ENCODE measurements at regions of chr3 and their contacts with region 1.

Region 1: GRCh38 chr3:100590114-100590839 is 19.1 kb upstream of the ADGRG7 start:
- DNase-seq: peak in 8 of 9 experiments; percentile 29 to 81 (median 60)
- ATAC-seq: peak; percentile 89
- H3K4me3 ChIP-seq: peak overlapping the region in 1 of 2 experiments; percentile 9
- H3K4me3 Mint-ChIP-seq: peak overlapping the region; percentile 7
- H3K27ac ChIP-seq: no peak overlapping the region
- H3K27ac Mint-ChIP-seq: no peak overlapping the region
- H3K4me1 ChIP-seq: peaks cover 3% of the 10 kb centered on the region
- H3K4me1 Mint-ChIP-seq: peaks cover 3% of the 10 kb centered on the region
- H3K27me3 ChIP-seq: no peaks in the 10 kb centered on the region
- H3K27me3 Mint-ChIP-seq: no peaks in the 10 kb centered on the region
- CTCF ChIP-seq: peak; percentile 81

Region 2: GRCh38 chr3:100316641-100317069 is 273.6 kb before region 1 on chr3:
- CTCF ChIA-PET with region 1: interaction called, 39 read pairs
- POLR2A ChIA-PET with region 1: no interaction called
- intact Hi-C with region 1: loop called (anchors 1 kb)
- DNase-seq: peak in 6 of 9 experiments; percentile 13 to 76 (median 30)
- ATAC-seq: peak; percentile 84
- H3K4me3 ChIP-seq: no peak overlapping the region
- H3K4me3 Mint-ChIP-seq: peak overlapping the region; percentile 45
- H3K27ac ChIP-seq: no peak overlapping the region
- H3K27ac Mint-ChIP-seq: no peak overlapping the region
- H3K4me1 ChIP-seq: no peaks in the 10 kb centered on the region
- H3K4me1 Mint-ChIP-seq: peaks cover 6% of the 10 kb centered on the region
- H3K27me3 ChIP-seq: no peaks in the 10 kb centered on the region
- H3K27me3 Mint-ChIP-seq: no peaks in the 10 kb centered on the region
- CTCF ChIP-seq: peak; percentile 58

Region 3: DNA sequence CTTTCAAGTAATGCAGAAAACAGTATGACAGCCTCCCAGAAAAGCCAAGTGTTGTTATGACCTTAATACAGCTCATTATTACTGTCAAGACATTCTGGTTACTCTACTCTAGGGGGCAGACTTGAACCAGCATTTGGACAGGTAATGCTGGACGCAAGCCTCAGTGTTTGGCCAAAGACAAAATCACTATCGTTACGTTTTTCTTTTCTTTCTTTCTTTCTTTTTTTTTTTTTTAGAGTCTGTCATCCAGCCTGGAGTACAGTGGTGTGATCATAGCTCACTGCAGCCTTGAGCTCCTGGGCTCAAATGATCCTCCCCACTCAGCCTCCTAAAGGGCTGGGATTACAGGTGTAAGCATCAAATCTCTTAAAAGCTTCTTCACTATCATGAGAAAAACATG is 127.3 kb before region 1 on chr3:
- CTCF ChIA-PET with region 1: interaction called, 5 read pairs
- POLR2A ChIA-PET with region 1: no interaction called
- intact Hi-C with region 1: loop called in 1 of 2 experiments (anchors 1 kb)
- DNase-seq: peak in 2 of 9 experiments; percentile 16 to 19
- ATAC-seq: no peak
- H3K4me3 ChIP-seq: no peak overlapping the region
- H3K4me3 Mint-ChIP-seq: no peak overlapping the region
- H3K27ac ChIP-seq: no peak overlapping the region
- H3K27ac Mint-ChIP-seq: no peak overlapping the region
- H3K4me1 ChIP-seq: no peaks in the 10 kb centered on the region
- H3K4me1 Mint-ChIP-seq: no peaks in the 10 kb centered on the region
- H3K27me3 ChIP-seq: no peaks in the 10 kb centered on the region
- H3K27me3 Mint-ChIP-seq: peaks cover 2% of the 10 kb centered on the region
- CTCF ChIP-seq: peak; percentile 44

Region 4: DNA sequence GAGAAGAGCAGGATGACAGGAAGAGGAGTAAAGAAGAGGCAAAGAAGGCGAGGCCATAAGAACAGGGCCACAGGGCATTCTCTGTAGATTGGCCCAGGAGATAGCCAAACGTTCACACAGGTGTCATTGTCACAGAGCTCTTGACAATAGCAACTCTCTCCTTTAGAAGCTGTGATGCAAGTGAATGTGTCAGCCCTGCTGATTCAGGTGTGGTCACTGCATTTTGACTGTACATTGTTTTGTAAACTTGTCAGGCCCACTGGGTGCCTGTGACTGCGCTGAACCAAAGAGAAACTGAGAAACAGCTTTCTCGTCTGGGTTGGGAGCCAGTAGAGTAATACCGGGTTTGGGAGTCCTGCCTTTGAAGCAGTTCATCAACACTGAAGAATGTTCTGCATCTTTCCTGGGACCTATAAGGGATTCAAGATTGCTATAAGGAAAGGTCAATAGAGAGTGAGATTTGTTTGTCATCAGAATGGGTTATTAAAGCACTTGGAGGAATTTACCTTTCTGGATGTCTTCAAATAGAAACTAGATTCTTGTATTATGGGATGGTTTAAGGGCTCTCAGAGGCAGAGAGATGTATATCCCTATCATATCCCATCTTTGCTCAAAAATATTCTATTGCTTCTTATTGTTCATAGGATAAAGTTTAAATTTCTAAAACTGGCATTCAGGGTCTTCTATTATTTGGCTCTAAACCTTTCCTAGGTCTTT is 52.5 kb before region 1 on chr3:
- CTCF ChIA-PET with region 1: no interaction called
- POLR2A ChIA-PET with region 1: no interaction called
- intact Hi-C with region 1: no loop called
- DNase-seq: no peak
- ATAC-seq: no peak
- H3K4me3 ChIP-seq: no peak overlapping the region
- H3K4me3 Mint-ChIP-seq: no peak overlapping the region
- H3K27ac ChIP-seq: no peak overlapping the region
- H3K27ac Mint-ChIP-seq: no peak overlapping the region
- H3K4me1 ChIP-seq: no peaks in the 10 kb centered on the region
- H3K4me1 Mint-ChIP-seq: no peaks in the 10 kb centered on the region
- H3K27me3 ChIP-seq: no peaks in the 10 kb centered on the region
- H3K27me3 Mint-ChIP-seq: no peaks in the 10 kb centered on the region
- CTCF ChIP-seq: no peak

Measured in CD8-positive, alpha-beta T cell (primary cell).